Common myeloid progenitor, CD34-positive (primary cell): ENCODE measurements at regions of chr3 and their contacts with region 1.

Region 1: GRCh38 chr3:46629551-46630517 is 17.5 kb downstream of the FAM240A start:
- DNase-seq: peak; percentile 77 to 86 (median 85)
- H3K4me3 ChIP-seq: peak overlapping the region in 5 of 7 experiments; percentile 56 to 78 (median 70)
- H3K27ac ChIP-seq: peak overlapping the region in 1 of 2 experiments; percentile 44
- H3K4me1 ChIP-seq: peaks cover 0 to 12% (median 9%) of the 10 kb centered on the region in 4 experiments
- H3K27me3 ChIP-seq: no peaks in the 10 kb centered on the region

Region 2: GRCh38 chr3:46558184-46559043 is 71.4 kb before region 1 on chr3:
- CTCF ChIA-PET with region 1: interaction called, 12 read pairs
- POLR2A ChIA-PET with region 1: no interaction called
- DNase-seq: peak; percentile 88 to 90 (median 89)
- H3K4me3 ChIP-seq: peak overlapping the region in 6 of 7 experiments; percentile 44 to 89 (median 68)
- H3K27ac ChIP-seq: no peak overlapping the region
- H3K4me1 ChIP-seq: peaks cover 0 to 8% (median 2%) of the 10 kb centered on the region in 4 experiments
- H3K27me3 ChIP-seq: no peaks in the 10 kb centered on the region

Region 3: GRCh38 chr3:46695962-46696894 is 66.4 kb after region 1 on chr3:
- CTCF ChIA-PET with region 1: no interaction called
- POLR2A ChIA-PET with region 1: no interaction called
- DNase-seq: peak in 1 of 3 donors; percentile 22
- H3K4me3 ChIP-seq: no peak overlapping the region
- H3K27ac ChIP-seq: no peak overlapping the region
- H3K4me1 ChIP-seq: peaks cover 2 to 50% (median 41%) of the 10 kb centered on the region in 4 experiments
- H3K27me3 ChIP-seq: peaks cover 0 to 4% (median under 1%) of the 10 kb centered on the region in 5 experiments

Region 4: GRCh38 chr3:46778101-46778500 is 148.3 kb after region 1 on chr3:
- CTCF ChIA-PET with region 1: no interaction called
- POLR2A ChIA-PET with region 1: no interaction called
- DNase-seq: peak in 1 of 3 donors; percentile 4
- H3K4me3 ChIP-seq: no peak overlapping the region
- H3K27ac ChIP-seq: no peak overlapping the region
- H3K4me1 ChIP-seq: no peaks in the 10 kb centered on the region
- H3K27me3 ChIP-seq: no peaks in the 10 kb centered on the region

Region 5: DNA sequence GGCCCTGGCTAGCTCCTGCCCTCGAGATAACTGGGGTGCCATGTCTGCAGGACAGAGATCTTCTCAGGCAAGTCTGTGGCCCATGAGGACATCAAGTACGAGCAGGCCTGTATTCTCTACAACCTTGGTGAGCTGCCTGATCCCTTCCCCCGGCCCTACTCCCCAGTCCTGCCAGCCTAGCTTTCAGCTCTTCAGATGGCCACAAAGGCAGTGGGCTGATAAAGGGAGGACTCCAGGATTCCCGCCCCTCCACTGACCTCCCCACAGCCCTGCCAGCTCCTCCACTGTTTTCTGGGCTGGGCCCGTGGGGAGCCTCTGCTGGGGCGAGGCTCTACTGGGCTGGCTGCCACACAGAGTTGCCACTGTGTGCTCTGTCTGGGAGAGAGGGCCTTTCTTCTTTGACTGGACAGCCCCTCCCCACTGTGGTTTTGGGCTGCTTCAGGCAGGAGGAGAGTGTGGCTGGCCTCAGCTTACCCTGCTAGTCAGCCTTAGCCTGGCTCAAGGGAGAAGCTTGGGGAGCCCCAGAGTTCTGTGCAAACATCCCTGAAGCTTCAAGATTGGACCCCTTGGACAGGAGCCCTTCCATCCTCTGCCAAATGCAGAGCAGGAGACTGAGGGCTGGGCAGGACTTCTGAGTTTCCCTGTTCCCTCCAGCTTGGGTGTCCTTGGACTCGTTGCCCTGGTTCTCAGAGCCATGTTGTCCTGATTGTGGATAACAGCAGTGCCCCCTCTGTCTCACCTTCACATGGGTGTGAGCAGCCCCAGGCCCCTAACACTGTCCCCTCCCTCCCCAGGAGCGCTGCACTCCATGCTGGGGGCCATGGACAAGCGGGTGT is 775.3 kb after region 1 on chr3:
- CTCF ChIA-PET with region 1: no interaction called
- POLR2A ChIA-PET with region 1: no interaction called
- DNase-seq: peak in 1 of 3 donors; percentile 6
- H3K4me3 ChIP-seq: no peak overlapping the region
- H3K27ac ChIP-seq: peak overlapping the region; percentile 14 to 25
- H3K4me1 ChIP-seq: peaks cover 0 to 7% (median 0%) of the 10 kb centered on the region in 4 experiments
- H3K27me3 ChIP-seq: no peaks in the 10 kb centered on the region